Dorsolateral prefrontal cortex (tissue), 120 donors: ENCODE measurements at regions of chr4 and their contacts with region 1.

Region 1: GRCh38 chr4:113094802-113095201 is 45.3 kb downstream of the ANK2 start:
- DNase-seq: no peak
- H3K4me3 ChIP-seq: peak overlapping the region in 6 of 59 donors; percentile 7 to 21 (median 11)
- H3K27ac ChIP-seq: peak overlapping the region in 38 of 59 donors; percentile 1 to 74 (median 40)
- H3K27me3 ChIP-seq: no peaks in the 10 kb centered on the region
- CTCF ChIP-seq: peak; percentile 57 to 95 (median 82)

Region 2: DNA sequence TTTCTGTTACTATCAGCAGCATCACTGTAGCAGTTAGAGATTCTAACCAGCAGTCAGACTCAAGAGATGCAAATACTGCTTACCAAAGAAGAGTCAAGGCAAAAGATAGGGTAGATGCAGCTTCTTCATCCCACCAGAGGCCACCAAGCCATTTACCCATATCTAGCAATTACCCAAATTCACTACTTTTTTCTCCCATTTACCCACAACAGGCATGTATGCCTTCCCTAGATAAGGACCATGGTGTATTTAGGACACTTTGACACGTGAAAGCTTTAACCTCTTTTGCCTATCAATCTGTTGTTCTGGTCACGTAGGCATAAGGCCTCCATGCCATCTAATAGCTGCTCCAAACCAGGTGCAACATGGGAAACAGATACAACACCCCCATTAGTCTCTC is 452.3 kb before region 1 on chr4:
- intact Hi-C with region 1: loop called in 1 of 2 experiments (anchors 5 kb)
- DNase-seq: no peak
- H3K4me3 ChIP-seq: no peak overlapping the region
- H3K27ac ChIP-seq: no peak overlapping the region
- H3K27me3 ChIP-seq: no peaks in the 10 kb centered on the region
- CTCF ChIP-seq: no peak